Gastrocnemius medialis (tissue), 4 donors: ENCODE measurements at regions of chr17 and their contacts with region 1.

Region 1: GRCh38 chr17:77054936-77055335 is 85.8 kb upstream of the SEC14L1 start:
- DNase-seq: no peak
- ATAC-seq: no peak
- H3K4me3 ChIP-seq: no peak overlapping the region
- H3K27ac ChIP-seq: no peak overlapping the region
- H3K4me1 ChIP-seq: no peaks in the 10 kb centered on the region
- H3K27me3 ChIP-seq: peaks cover 22 to 34% (median 26%) of the 10 kb centered on the region in 3 donors
- CTCF ChIP-seq: no peak
- POLR2A ChIP-seq: no peak

Region 2: DNA sequence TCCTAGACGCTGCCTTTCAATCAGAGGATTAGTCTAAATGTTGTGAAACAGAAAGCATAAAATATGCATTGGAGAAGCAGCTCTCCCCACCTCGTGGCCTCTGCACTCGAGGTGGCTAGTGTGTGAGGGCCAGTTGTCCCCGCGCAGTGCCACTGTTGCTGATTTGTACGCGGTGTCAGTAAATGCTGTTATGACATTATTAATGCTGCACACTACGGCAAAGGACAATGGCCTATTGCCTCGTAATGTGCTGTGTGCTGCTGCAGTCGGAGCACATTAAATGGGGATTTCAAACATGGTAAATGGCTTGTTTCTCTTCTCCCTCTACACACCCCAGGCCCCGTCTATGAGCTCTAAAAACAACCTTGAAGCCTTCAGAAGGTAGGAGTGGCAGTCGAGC is 192.4 kb before region 1 on chr17:
- in situ Hi-C with region 1: loop called (anchors 5 to 10 kb)
- intact Hi-C with region 1: no loop called
- DNase-seq: no peak
- ATAC-seq: no peak
- H3K4me3 ChIP-seq: no peak overlapping the region
- H3K27ac ChIP-seq: no peak overlapping the region
- H3K4me1 ChIP-seq: no peaks in the 10 kb centered on the region
- H3K27me3 ChIP-seq: no peaks in the 10 kb centered on the region
- CTCF ChIP-seq: no peak
- POLR2A ChIP-seq: no peak

Region 3: GRCh38 chr17:77076124-77076872 is 21.4 kb after region 1 on chr17:
- in situ Hi-C with region 1: no loop called
- intact Hi-C with region 1: no loop called
- DNase-seq: no peak
- ATAC-seq: no peak
- H3K4me3 ChIP-seq: peak overlapping the region in 1 of 4 donors; percentile 14
- H3K27ac ChIP-seq: no peak overlapping the region
- H3K4me1 ChIP-seq: peaks cover 2 to 4% of the 10 kb centered on the region in 2 donors
- H3K27me3 ChIP-seq: peaks cover 0 to 13% (median 0%) of the 10 kb centered on the region in 3 donors
- CTCF ChIP-seq: no peak
- POLR2A ChIP-seq: no peak

Region 4: GRCh38 chr17:77501101-77501566 is 446.2 kb after region 1 on chr17:
- in situ Hi-C with region 1: loop called in 2 of 4 experiments (anchors 25 kb)
- intact Hi-C with region 1: no loop called
- DNase-seq: peak in 1 of 2 donors; percentile 10
- ATAC-seq: no peak
- H3K4me3 ChIP-seq: no peak overlapping the region
- H3K27ac ChIP-seq: no peak overlapping the region
- H3K4me1 ChIP-seq: no peaks in the 10 kb centered on the region
- H3K27me3 ChIP-seq: no peaks in the 10 kb centered on the region
- CTCF ChIP-seq: peak in 2 of 5 experiments; percentile 17 to 35
- POLR2A ChIP-seq: no peak